ENCODE measurements at regions of chr1 and their contacts with region 1.

Region 1: GRCh38 chr1:154198756-154199562 is 7.1 kb upstream of the TPM3 start:
- DNase-seq: no peak
- H3K4me3 ChIP-seq: no peak overlapping the region
- H3K27me3 ChIP-seq: peaks cover 4% of the 10 kb centered on the region
- CTCF ChIP-seq: peak; percentile 65

Region 2: GRCh38 chr1:154272217-154272998 is 73.4 kb after region 1 on chr1 and contains the start of gene HAX1:
- CTCF ChIA-PET with region 1: interaction called, 19 read pairs
- POLR2A ChIA-PET with region 1: no interaction called
- DNase-seq: peak; percentile 89
- H3K4me3 ChIP-seq: peak within 1 kb of the TSS; percentile 85
- H3K27me3 ChIP-seq: no peaks in the 10 kb centered on the region
- CTCF ChIP-seq: peak; percentile 79
- polyA plus RNA-seq, gene HAX1: 268 and 270 TPM in 2 replicates

Region 3: DNA sequence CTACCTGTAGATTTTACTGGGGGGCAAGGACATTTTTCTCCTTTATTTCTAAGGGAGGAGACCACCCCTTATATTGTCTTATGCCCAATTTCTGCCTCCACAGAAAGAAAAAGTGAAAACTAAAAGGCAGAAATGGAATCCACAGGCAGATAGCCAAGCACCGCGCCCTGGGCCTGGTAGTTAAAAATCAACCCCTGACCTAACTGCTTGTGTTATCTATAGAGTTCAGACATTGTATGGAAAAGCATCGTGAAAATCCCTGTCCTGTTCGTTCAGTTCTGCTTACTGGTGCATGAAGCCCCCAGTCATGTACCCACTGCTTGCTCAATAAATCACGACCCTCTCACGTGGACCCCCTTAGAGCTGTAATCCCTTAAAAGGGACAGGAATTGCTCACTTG is 172.5 kb after region 1 on chr1:
- CTCF ChIA-PET with region 1: no interaction called
- POLR2A ChIA-PET with region 1: no interaction called
- DNase-seq: no peak
- H3K4me3 ChIP-seq: no peak overlapping the region
- H3K27me3 ChIP-seq: no peaks in the 10 kb centered on the region
- CTCF ChIP-seq: no peak